Lower leg skin (tissue), 4 donors: ENCODE measurements at regions of chr9 and their contacts with region 1.

Region 1: DNA sequence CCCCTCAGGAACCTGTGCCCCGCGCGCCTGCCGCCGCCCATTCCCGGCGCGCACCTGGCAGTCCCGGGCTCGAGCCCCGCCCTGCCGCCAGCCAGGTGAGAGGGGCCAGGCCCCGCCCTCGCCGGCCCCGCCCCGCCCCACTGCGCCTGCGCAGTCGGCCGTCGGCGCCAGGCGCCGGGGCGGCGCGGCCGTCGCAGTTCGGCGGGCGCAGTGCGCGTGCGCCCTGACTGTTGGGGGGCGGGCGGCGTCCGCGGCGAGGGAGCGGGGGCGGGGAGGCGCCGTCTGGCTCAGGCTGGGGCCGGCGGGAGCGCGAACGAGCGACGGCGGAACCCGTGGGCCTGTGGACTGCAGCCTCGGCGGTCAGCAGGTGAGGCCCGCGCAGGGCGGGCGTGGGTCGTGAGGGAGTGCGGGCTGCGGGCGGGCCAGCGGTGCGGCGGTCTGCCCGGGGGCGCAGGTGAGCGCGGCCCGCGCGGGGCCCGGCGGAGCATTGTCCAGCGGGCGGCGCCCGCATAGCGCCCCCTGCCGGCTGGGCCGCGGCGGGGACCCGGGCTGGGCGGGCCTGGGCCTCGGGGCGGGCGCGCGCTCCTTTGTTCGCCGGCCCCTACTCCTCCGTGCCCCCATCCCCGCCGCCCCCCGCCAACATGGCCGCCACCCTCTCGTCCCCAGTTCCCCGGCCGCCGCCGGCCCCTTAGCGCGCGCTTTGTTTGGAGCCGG is at the start of gene SPIN1:
- DNase-seq: peak; percentile 30 to 95
- H3K4me3 ChIP-seq: peak within 1 kb of the TSS; percentile 63
- CTCF ChIP-seq: no peak
- POLR2A ChIP-seq: peak in 1 of 2 donors; percentile 63
- total RNA-seq, gene SPIN1: 44.3 to 49.6 (median 49.5) TPM

Region 2: DNA sequence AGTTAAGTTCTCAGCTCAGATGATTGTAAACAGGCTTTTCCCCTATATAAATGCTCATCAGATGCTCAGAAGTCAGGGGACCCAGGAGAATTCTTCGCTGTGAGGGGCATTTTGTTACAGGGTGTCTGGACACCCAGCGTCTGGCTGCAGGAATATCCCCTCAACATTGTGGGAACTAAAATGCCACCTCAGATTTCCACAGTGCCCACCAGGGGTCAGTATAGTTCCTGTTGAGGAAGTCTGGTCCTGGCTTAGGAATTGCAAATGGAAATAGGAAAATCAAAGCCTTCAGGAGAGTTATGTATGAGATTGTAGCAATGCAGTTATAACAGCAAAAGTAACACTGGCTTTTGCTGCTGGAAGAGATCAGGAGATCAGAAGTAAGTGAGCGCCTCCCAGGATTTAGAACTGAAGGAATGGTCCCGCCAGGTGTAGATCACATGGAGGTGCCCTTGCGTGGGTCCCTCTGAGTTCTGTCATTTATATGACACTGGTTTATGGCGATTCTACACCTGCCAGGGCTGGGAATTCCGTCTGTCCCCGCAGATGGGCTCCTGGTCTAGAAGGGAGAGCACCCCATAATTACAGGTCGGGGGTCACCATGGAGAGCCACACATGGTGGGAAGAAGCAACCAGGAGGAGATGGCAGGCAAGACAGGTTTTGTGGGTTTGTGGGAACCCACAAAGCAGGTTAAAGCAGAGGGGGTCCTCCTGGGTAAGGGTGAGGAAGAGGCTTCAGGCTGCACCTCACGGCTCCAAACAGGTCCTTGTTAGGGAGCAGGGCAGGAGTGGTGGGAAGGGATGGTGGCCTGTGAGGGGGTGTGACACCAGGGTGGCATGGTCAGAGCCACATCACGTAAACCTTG is 709.4 kb before region 1 on chr9:
- intact Hi-C with region 1: loop called (anchors 10 kb)
- DNase-seq: peak; percentile 42 to 85
- H3K4me3 ChIP-seq: no peak overlapping the region
- CTCF ChIP-seq: no peak
- POLR2A ChIP-seq: no peak

Region 3: GRCh38 chr9:88355166-88355565 is 33.2 kb before region 1 on chr9:
- intact Hi-C with region 1: no loop called
- DNase-seq: no peak
- H3K4me3 ChIP-seq: no peak overlapping the region
- CTCF ChIP-seq: no peak
- POLR2A ChIP-seq: no peak

Region 4: GRCh38 chr9:88991066-88992034 is 603.0 kb after region 1 on chr9 and contains the start of gene S1PR3:
- intact Hi-C with region 1: loop called (anchors 5 kb)
- DNase-seq: peak in 1 of 2 donors; percentile 90
- H3K4me3 ChIP-seq: peak within 1 kb of the TSS; percentile 39
- CTCF ChIP-seq: no peak
- POLR2A ChIP-seq: no peak
- total RNA-seq, gene S1PR3: 3.1 to 10.9 (median 7.2) TPM